ENCODE measurements at regions of chr9 and their contacts with region 1.

Region 1: DNA sequence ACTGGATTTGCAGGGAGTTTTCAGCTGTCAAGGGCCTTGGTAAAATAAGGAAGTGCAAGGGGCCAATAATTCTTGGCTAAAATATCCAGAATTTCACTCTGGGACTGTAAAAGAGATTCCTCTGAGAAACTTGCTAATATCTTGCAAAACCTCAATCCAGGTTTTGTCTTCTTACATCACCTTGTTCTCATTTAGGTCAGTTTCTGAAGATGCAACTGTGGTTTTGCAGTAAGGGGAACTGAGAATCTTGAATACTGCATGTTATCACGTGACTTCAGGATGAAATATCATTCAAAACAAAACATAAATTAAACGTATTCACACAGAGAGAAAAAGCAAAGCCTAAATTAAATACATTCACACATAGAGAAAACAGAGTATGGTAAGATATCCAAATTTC is 35.0 kb upstream of the RIC1 start:
- DNase-seq: no peak
- H3K4me3 ChIP-seq: no peak overlapping the region
- CTCF ChIP-seq: no peak
- POLR2A ChIP-seq: no peak

Region 2: GRCh38 chr9:5442400-5443011 is 151.4 kb before region 1 on chr9:
- intact Hi-C with region 1: loop called (anchors 10 kb)
- DNase-seq: no peak
- H3K4me3 ChIP-seq: no peak overlapping the region
- CTCF ChIP-seq: peak in 1 of 3 donors; percentile 54
- POLR2A ChIP-seq: no peak

Measured in lower leg skin (tissue), 4 donors.